Activated CD4-positive, alpha-beta T cell treated with anti-CD3 and anti-CD28 coated beads for 36 hours (primary cell): ENCODE measurements at regions of chr16 and their contacts with region 1.

Region 1: GRCh38 chr16:74807052-74807646 is 32.5 kb upstream of the FA2H start:
- DNase-seq: no peak
- ATAC-seq: no peak
- H3K4me3 Mint-ChIP-seq: no peak overlapping the region
- H3K27ac Mint-ChIP-seq: no peak overlapping the region
- H3K4me1 Mint-ChIP-seq: no peaks in the 10 kb centered on the region
- H3K27me3 Mint-ChIP-seq: peaks cover 6% of the 10 kb centered on the region

Region 2: DNA sequence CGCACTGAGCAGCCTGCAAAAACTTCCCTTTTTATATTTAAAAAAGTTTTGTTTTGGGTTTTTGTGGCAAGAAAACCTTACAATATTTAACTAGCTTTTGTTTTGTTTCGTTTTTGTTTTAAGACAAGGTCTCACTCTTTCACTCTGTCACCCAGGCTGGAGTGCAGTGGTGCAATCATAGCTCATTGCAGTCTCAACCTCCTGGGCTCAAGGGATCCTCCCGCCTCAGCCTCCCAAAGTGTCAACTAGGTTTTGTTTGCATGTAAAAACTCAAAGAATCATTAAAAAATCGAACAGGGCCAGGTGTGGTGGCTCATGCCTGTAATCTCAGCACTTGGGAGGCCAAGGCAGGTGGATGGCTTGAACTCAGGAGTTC is 45.3 kb after region 1 on chr16:
- CTCF ChIA-PET with region 1: no interaction called
- POLR2A ChIA-PET with region 1: no interaction called
- intact Hi-C with region 1: loop called in 1 of 2 experiments (anchors 1 kb)
- DNase-seq: no peak
- ATAC-seq: no peak
- H3K4me3 Mint-ChIP-seq: no peak overlapping the region
- H3K27ac Mint-ChIP-seq: no peak overlapping the region
- H3K4me1 Mint-ChIP-seq: no peaks in the 10 kb centered on the region
- H3K27me3 Mint-ChIP-seq: no peaks in the 10 kb centered on the region